ENCODE measurements at regions of chr10 and their contacts with region 1.

Region 1: DNA sequence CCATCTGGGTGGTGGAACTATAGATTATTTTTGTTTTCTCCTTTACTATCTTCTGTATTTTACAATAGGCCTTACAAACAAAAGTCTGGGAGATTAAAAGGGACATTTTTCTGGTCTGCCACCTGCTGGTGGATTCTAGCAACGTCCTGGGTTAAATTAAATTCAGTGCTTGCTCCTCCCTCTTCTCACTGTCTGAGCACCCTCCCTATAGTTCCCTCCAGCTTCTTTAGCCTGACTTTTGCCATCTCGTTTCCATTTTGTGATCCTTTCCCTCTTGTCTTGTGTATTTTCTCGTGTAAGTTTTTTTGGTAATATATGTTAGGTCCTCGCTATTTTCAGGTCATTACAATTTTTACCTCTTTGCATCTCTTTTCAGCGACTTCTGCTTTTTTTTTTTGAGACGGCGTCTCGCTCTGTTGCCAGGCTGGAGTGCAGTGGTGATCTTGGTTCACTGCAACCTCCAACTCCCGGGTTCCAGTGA is 16.1 kb downstream of the ANKRD16 start:
- DNase-seq: peak in 1 of 2 experiments; percentile 79
- H3K4me3 ChIP-seq: no peak overlapping the region
- H3K27ac ChIP-seq: no peak overlapping the region
- H3K4me1 ChIP-seq: no peaks in the 10 kb centered on the region; a peak in 1 of 7 replicates
- H3K27me3 ChIP-seq: no peaks in the 10 kb centered on the region
- CTCF ChIP-seq: peak in 2 of 3 experiments; percentile 59 to 73; a peak in 3 of 4 replicates
- EP300 ChIP-seq: no peak
- POLR2A ChIP-seq: no peak
- RAD21 ChIP-seq: peak; percentile 48 to 53

Region 2: GRCh38 chr10:5813287-5814109 is 60.1 kb before region 1 on chr10 and contains the start of gene GDI2:
- CTCF ChIA-PET with region 1: interaction called, 13 read pairs
- POLR2A ChIA-PET with region 1: interaction called, 22 read pairs
- DNase-seq: peak; percentile 88 to 96
- H3K4me3 ChIP-seq: peak within 1 kb of the TSS; percentile 90 to 98 (median 94)
- H3K27ac ChIP-seq: peak within 1 kb of the TSS; percentile 90
- H3K4me1 ChIP-seq: peaks cover 0 to 3% (median 0%) of the 10 kb centered on the region in 4 experiments; a peak in 1 of 7 replicates
- H3K27me3 ChIP-seq: no peaks in the 10 kb centered on the region
- CTCF ChIP-seq: no peak
- EP300 ChIP-seq: peak in 1 of 2 experiments; percentile 55; a peak in 1 of 3 replicates
- POLR2A ChIP-seq: peak; percentile 96 to 98
- RAD21 ChIP-seq: no peak; a peak in 1 of 4 replicates
- total RNA-seq, gene GDI2: 368 and 385 TPM in 2 replicates

Region 3: GRCh38 chr10:5862360-5862961 is 11.1 kb before region 1 on chr10:
- CTCF ChIA-PET with region 1: interaction called, 70 read pairs
- POLR2A ChIA-PET with region 1: interaction called, 14 read pairs
- DNase-seq: no peak
- H3K4me3 ChIP-seq: no peak overlapping the region
- H3K27ac ChIP-seq: no peak overlapping the region
- H3K4me1 ChIP-seq: no peaks in the 10 kb centered on the region; a peak in 1 of 7 replicates
- H3K27me3 ChIP-seq: no peaks in the 10 kb centered on the region
- CTCF ChIP-seq: no peak
- EP300 ChIP-seq: no peak
- POLR2A ChIP-seq: no peak
- RAD21 ChIP-seq: no peak

Measured in H1 (cell line).